Activated T-helper 1 cell treated with anti-CD3 and anti-CD28 coated beads, Interleukin-12 subunit alpha, Interleukin-12 subunit beta, Interleukin-2, Interleukin-4 antibody, amounts not matched to agents 30 ng/mL and 10 ng/mL and 1 ng/mL, durations not matched to agents 14 hours and 24 hours and 36 hours (primary cell): ENCODE measurements at regions of chr10 and their contacts with region 1.

Region 1: GRCh38 chr10:24324651-24325050 is 115.7 kb downstream of the KIAA1217 start:
- DNase-seq: no peak
- H3K4me3 Mint-ChIP-seq: no peak overlapping the region
- H3K27ac Mint-ChIP-seq: no peak overlapping the region
- H3K4me1 Mint-ChIP-seq: no peaks in the 10 kb centered on the region
- H3K27me3 Mint-ChIP-seq: peaks cover 2% of the 10 kb centered on the region

Region 2: GRCh38 chr10:23980094-23980493 is 344.6 kb before region 1 on chr10:
- intact Hi-C with region 1: no loop called
- DNase-seq: no peak
- H3K4me3 Mint-ChIP-seq: no peak overlapping the region
- H3K27ac Mint-ChIP-seq: no peak overlapping the region
- H3K4me1 Mint-ChIP-seq: no peaks in the 10 kb centered on the region
- H3K27me3 Mint-ChIP-seq: no peaks in the 10 kb centered on the region

Region 3: GRCh38 chr10:23994479-23995046 is 330.1 kb before region 1 on chr10:
- intact Hi-C with region 1: loop called (anchors 1 kb)
- DNase-seq: peak; percentile 5
- H3K4me3 Mint-ChIP-seq: no peak overlapping the region
- H3K27ac Mint-ChIP-seq: no peak overlapping the region
- H3K4me1 Mint-ChIP-seq: no peaks in the 10 kb centered on the region
- H3K27me3 Mint-ChIP-seq: no peaks in the 10 kb centered on the region

Region 4: GRCh38 chr10:24344279-24344678 is 19.6 kb after region 1 on chr10:
- intact Hi-C with region 1: no loop called
- DNase-seq: no peak
- H3K4me3 Mint-ChIP-seq: no peak overlapping the region
- H3K27ac Mint-ChIP-seq: no peak overlapping the region
- H3K4me1 Mint-ChIP-seq: no peaks in the 10 kb centered on the region
- H3K27me3 Mint-ChIP-seq: peaks cover 10% of the 10 kb centered on the region

Region 5: GRCh38 chr10:24488631-24489030 is 164.0 kb after region 1 on chr10:
- intact Hi-C with region 1: no loop called
- DNase-seq: no peak
- H3K4me3 Mint-ChIP-seq: no peak overlapping the region
- H3K27ac Mint-ChIP-seq: no peak overlapping the region
- H3K4me1 Mint-ChIP-seq: peaks cover 8% of the 10 kb centered on the region
- H3K27me3 Mint-ChIP-seq: no peaks in the 10 kb centered on the region